ENCODE measurements at regions of chr2 and their contacts with region 1.

Region 1: GRCh38 chr2:73071360-73072133 is at the start of gene SFXN5:
- DNase-seq: peak; percentile 90 to 99
- H3K4me3 ChIP-seq: peak within 1 kb of the TSS; percentile 91 to 92
- H3K27ac ChIP-seq: peak within 1 kb of the TSS; percentile 84 to 93
- H3K4me1 ChIP-seq: peaks cover 10 to 15% of the 10 kb centered on the region in 2 donors
- H3K27me3 ChIP-seq: no peaks in the 10 kb centered on the region
- CTCF ChIP-seq: peak; percentile 21 to 24 (median 24)
- total RNA-seq, gene SFXN5: 9.3 TPM

Region 2: DNA sequence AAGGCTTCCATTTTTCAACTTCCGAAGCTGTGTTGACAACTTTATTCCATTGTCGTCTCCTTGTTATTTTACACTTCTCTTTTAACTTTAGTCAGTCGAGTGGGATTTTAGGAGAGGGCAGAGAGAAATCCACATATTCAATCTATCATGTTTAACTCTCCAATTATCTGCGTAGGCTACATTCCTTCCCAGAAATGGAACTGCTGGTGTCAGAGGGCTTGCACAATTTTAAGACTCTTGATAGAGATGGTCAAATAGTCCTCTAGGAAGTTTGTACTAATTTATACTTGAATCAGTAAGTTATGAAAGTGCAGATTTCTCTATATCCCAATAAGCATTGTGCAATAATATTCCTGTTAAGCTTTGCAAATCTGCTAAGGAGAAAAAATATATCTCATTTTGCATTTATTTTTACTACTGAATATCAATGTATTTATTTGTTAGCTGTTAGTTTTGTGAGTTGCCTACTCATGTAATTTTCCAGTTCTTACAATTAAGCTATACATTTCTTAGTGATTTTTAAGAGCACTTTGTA is 1019.5 kb before region 1 on chr2:
- intact Hi-C with region 1: no loop called
- DNase-seq: no peak
- H3K4me3 ChIP-seq: no peak overlapping the region
- H3K27ac ChIP-seq: no peak overlapping the region
- H3K4me1 ChIP-seq: no peaks in the 10 kb centered on the region
- H3K27me3 ChIP-seq: no peaks in the 10 kb centered on the region
- CTCF ChIP-seq: no peak

Region 3: DNA sequence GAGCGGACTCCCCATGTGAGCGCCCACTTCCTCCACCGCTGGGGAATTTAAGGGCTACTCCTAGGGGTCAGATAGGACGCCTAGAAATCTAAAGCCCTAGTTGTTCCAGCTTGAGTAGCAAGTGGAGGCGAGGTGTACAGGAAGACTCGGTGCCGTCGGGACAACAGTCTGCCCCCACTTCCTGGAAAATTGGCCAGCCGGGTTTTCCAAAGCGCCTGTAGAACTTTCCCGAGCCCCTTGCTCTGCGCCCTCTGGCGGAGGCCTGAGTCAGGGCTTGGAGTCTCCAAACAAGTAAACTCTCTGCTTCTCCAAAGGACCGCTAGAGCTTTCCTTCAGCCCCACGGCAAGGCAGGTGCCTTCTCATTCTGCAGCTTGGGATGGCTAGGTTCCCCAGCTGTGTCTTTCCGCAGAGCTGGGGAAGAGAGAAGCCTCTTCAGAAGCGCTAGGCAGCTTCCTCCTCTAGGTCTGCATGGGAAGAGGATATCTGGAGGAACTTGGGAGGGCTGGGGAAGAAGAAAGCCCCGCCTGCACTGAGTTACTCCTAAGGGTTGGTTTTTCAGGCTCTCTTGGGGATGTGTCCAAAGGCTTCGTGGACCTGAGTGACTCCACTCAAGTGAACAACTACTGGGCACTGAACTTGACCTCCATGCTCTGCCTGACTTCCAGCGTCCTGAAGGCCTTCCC is 183.7 kb before region 1 on chr2:
- intact Hi-C with region 1: loop called (anchors 1 kb)
- DNase-seq: peak; percentile 50 to 94
- H3K4me3 ChIP-seq: peak overlapping the region; percentile 81 to 89
- H3K27ac ChIP-seq: peak overlapping the region; percentile 84 to 89
- H3K4me1 ChIP-seq: peaks cover 5 to 16% of the 10 kb centered on the region in 2 donors
- H3K27me3 ChIP-seq: no peaks in the 10 kb centered on the region
- CTCF ChIP-seq: peak; percentile 78 to 96 (median 95)

Region 4: GRCh38 chr2:72915907-72916742 is 155.4 kb before region 1 on chr2:
- intact Hi-C with region 1: no loop called
- DNase-seq: no peak
- H3K4me3 ChIP-seq: peak overlapping the region; percentile 54 to 60
- H3K27ac ChIP-seq: no peak overlapping the region
- H3K4me1 ChIP-seq: peaks cover 12 to 39% of the 10 kb centered on the region in 2 donors
- H3K27me3 ChIP-seq: peaks cover 47% of the 10 kb centered on the region
- CTCF ChIP-seq: no peak

Region 5: GRCh38 chr2:73085691-73086360 is 14.3 kb after region 1 on chr2:
- intact Hi-C with region 1: loop called (anchors 1 kb)
- DNase-seq: peak; percentile 44 to 91
- H3K4me3 ChIP-seq: peak overlapping the region in 1 of 2 donors; percentile 60
- H3K27ac ChIP-seq: no peak overlapping the region
- H3K4me1 ChIP-seq: peaks cover 19 to 58% of the 10 kb centered on the region in 2 donors
- H3K27me3 ChIP-seq: no peaks in the 10 kb centered on the region
- CTCF ChIP-seq: peak; percentile 85 to 97 (median 92)

Region 6: DNA sequence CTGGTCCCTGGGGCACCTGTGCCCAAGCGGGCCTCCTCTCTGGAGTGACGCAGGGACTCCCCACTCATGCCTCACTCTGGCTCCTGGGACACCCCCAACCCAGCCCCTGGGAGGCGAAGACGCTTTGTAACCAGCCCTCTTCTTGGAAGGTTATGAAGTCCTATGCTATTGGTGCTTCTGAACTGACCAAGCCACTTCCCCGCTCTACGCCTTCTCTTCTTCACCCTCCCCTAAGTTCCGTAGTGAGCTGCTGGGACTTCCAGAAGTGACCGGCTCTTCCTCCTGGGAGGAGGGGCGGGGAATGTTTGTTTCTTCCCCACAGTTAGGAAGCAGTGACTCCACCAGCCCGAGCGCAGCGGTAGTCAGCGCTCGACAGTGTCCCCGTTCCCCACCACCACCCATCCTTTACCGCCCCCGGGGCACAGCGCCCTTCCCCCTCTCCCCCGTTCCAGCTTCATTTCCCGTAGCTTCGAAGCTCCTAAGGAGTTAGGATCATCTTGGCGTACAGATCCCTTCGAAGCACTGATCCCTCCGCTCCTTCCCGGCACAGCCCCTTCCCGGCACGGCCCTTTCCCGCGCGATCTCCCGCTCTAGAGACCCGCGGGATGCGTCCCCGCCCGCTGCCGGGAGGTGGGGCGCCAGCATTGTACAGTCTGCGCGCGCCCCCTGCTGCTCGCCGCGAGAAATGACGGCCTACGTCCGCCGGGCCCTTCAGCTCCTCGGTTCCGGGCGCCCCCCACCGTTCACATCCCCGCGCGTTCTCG is 105.5 kb after region 1 on chr2:
- intact Hi-C with region 1: loop called (anchors 5 kb)
- DNase-seq: peak; percentile 51 to 96
- H3K4me3 ChIP-seq: peak overlapping the region; percentile 46 to 83
- H3K27ac ChIP-seq: peak overlapping the region; percentile 59 to 85
- H3K4me1 ChIP-seq: peaks cover 9 to 19% of the 10 kb centered on the region in 2 donors
- H3K27me3 ChIP-seq: no peaks in the 10 kb centered on the region
- CTCF ChIP-seq: peak; percentile 98 to 99 (median 99)

Region 7: DNA sequence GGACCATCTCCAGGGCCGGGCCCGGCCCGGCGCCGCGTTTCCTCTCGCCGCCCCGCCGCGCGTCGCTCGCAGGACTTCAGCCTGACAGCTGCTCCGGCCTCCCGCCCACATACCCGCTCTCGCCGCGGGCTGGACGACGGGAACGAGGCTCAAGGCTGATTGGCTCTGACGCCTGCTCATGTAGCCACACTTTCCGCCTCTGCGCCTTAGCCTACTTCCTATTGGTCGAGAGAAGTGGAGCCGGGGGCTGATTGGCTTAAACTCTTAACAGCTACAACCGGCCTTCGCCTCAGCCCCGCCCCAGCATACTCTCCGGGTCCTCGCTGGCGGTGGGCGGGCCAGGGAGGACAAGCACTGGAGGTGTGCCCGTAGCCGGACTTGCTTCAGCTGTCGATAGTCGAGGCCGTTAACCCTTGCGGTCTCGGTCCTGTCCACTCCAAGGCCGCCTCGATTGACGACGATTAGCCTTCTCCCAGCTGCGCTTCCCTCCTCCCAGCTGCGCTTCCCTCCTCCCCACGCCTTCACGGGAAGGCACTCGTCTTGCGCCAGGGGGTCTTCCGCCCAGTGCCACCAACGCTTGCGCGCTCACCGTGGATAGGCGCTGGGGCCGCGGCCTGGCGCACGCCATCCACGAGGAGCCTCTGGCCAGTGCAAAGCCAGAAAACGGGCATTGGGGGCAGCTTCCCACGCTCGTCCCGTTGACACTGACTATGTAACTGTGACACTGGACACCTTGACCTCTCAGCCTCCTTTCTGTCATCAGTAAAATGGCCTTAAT is 161.8 kb after region 1 on chr2 and contains the start of gene PRADC1:
- intact Hi-C with region 1: loop called (anchors 2 kb)
- DNase-seq: peak; percentile 98 to 100
- H3K4me3 ChIP-seq: peak within 1 kb of the TSS; percentile 82 to 85
- H3K27ac ChIP-seq: peak within 1 kb of the TSS; percentile 93 to 96
- H3K4me1 ChIP-seq: peaks cover 4 to 5% of the 10 kb centered on the region in 2 donors
- H3K27me3 ChIP-seq: no peaks in the 10 kb centered on the region
- CTCF ChIP-seq: no peak
- total RNA-seq, gene PRADC1: 77.0 TPM

Region 8: GRCh38 chr2:73736855-73737779 is 665.6 kb after region 1 on chr2 and contains the start of gene TPRKB:
- intact Hi-C with region 1: loop called (anchors 5 kb)
- DNase-seq: peak; percentile 84 to 98
- H3K4me3 ChIP-seq: peak within 1 kb of the TSS; percentile 73 to 79
- H3K27ac ChIP-seq: peak within 1 kb of the TSS; percentile 64 to 73
- H3K4me1 ChIP-seq: peaks cover 0 to 16% of the 10 kb centered on the region in 2 donors
- H3K27me3 ChIP-seq: no peaks in the 10 kb centered on the region
- CTCF ChIP-seq: no peak
- total RNA-seq, gene TPRKB: 11.1 TPM